Prostate gland (tissue), 2 donors: ENCODE measurements at regions of chr17 and their contacts with region 1.

Region 1: GRCh38 chr17:36486204-36487194 is at the start of gene ZNHIT3:
- DNase-seq: peak; percentile 92
- H3K4me3 ChIP-seq: peak within 1 kb of the TSS; percentile 92 to 97
- H3K27ac ChIP-seq: peak within 1 kb of the TSS; percentile 83 to 85
- H3K4me1 ChIP-seq: no peaks in the 10 kb centered on the region
- H3K27me3 ChIP-seq: no peaks in the 10 kb centered on the region
- CTCF ChIP-seq: peak in 2 of 4 experiments; percentile 17 to 39
- POLR2A ChIP-seq: peak; percentile 60
- total RNA-seq, gene ZNHIT3: 29.1 to 36.9 TPM

Region 2: GRCh38 chr17:35969558-35970380 is 516.7 kb before region 1 on chr17:
- intact Hi-C with region 1: loop called (anchors 2 kb)
- DNase-seq: peak; percentile 77
- H3K4me3 ChIP-seq: no peak overlapping the region
- H3K27ac ChIP-seq: no peak overlapping the region
- H3K4me1 ChIP-seq: peaks cover 2% of the 10 kb centered on the region
- H3K27me3 ChIP-seq: no peaks in the 10 kb centered on the region
- CTCF ChIP-seq: peak; percentile 55 to 90 (median 82)
- POLR2A ChIP-seq: no peak

Region 3: DNA sequence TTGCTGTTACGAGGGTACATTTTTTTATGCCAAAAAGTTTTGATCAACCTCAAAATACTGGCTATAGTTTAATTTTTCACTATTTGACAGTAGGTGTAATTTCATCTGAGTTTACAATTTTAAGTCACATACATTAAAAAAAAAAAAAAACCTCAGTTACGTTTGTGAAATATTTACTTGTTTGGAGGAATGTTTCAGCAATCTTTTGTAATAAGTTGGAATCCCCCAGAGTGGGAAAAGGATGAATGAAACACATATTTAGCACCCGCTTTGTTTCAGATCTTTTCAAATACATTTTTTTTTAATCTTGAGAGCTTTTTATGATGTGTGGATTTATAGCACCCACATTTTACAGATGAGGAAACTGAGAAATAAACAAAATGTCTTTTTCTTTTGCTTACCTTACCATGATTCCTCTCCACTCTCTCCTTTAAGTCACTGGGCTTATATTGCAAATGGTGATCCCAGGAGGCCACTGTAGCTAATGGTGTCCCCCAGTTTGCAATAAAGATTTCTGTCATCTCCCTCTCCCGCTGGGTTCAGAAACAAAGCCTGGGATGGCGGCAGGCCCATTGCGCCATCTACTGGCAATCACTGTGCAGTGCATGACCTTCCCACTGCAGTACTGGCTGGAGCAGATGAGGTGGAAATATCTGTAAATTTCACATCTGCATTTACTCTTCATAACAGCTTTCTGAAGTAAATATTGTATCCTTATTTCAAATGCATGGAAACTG is 337.8 kb before region 1 on chr17:
- intact Hi-C with region 1: loop called (anchors 10 kb)
- DNase-seq: peak; percentile 61
- H3K4me3 ChIP-seq: no peak overlapping the region
- H3K27ac ChIP-seq: no peak overlapping the region
- H3K4me1 ChIP-seq: no peaks in the 10 kb centered on the region
- H3K27me3 ChIP-seq: no peaks in the 10 kb centered on the region
- CTCF ChIP-seq: peak; percentile 94 to 100 (median 96)
- POLR2A ChIP-seq: no peak

Region 4: GRCh38 chr17:36534840-36535668 is 48.6 kb after region 1 on chr17 and contains the starts of genes MYO19 and PIGW:
- intact Hi-C with region 1: loop called (anchors 5 kb)
- DNase-seq: peak; percentile 77
- H3K4me3 ChIP-seq: peak within 1 kb of the TSS; percentile 80 to 85
- H3K27ac ChIP-seq: peak within 1 kb of the TSS; percentile 91 to 95
- H3K4me1 ChIP-seq: peaks cover 5% of the 10 kb centered on the region
- H3K27me3 ChIP-seq: no peaks in the 10 kb centered on the region
- CTCF ChIP-seq: peak in 2 of 4 experiments; percentile 18 to 28
- POLR2A ChIP-seq: peak; percentile 61
- total RNA-seq, gene MYO19: 49.4 to 56.4 TPM
- total RNA-seq, gene PIGW: 6.4 to 7.1 TPM